Colonic mucosa (tissue), 4 donors: ENCODE measurements at regions of chr2 and their contacts with region 1.

Region 1: GRCh38 chr2:226984750-226985582 is 149.1 kb downstream of the RHBDD1 start:
- DNase-seq: peak; percentile 41
- H3K4me3 ChIP-seq: no peak overlapping the region
- H3K27ac ChIP-seq: no peak overlapping the region
- H3K4me1 ChIP-seq: no peaks in the 10 kb centered on the region
- H3K27me3 ChIP-seq: no peaks in the 10 kb centered on the region
- CTCF ChIP-seq: peak; percentile 42

Region 2: DNA sequence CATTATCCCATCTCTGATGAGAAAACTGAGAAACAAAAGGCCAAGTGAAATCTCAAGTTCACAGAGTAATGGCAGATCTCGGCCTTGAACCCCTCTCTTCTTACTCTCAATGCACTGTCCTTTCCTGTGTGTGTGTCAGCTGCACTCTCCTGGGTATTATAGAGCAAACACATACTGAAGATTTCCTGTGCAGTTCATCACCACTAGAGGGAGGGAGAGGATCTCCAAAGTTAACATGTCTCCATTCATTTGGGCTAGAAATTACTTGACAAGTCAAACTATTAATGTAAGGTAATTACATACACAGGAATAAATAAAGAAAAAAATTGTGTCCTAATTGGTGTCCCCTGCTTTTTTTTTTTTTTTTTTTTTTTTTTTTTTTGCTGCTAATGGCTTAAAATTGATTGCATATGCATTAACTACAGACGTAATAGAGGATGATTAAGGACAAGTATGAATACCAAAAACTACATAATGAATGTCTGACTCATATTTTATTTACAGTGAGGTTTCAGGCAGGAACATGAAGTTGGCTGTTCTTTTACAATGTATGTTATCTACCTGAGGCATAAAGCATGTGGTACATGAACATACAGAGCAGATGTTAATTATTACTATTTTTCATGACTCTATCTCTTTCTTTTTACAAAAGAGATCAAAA is 1316.2 kb before region 1 on chr2:
- intact Hi-C with region 1: loop called (anchors 5 kb)
- DNase-seq: peak; percentile 22
- H3K4me3 ChIP-seq: no peak overlapping the region
- H3K27ac ChIP-seq: no peak overlapping the region
- H3K4me1 ChIP-seq: no peaks in the 10 kb centered on the region
- H3K27me3 ChIP-seq: no peaks in the 10 kb centered on the region
- CTCF ChIP-seq: peak; percentile 74

Region 3: GRCh38 chr2:225889446-225889850 is 1095.5 kb before region 1 on chr2:
- intact Hi-C with region 1: loop called (anchors 5 kb)
- DNase-seq: peak; percentile 30
- H3K4me3 ChIP-seq: no peak overlapping the region
- H3K27ac ChIP-seq: no peak overlapping the region
- H3K4me1 ChIP-seq: no peaks in the 10 kb centered on the region
- H3K27me3 ChIP-seq: no peaks in the 10 kb centered on the region
- CTCF ChIP-seq: peak; percentile 57

Region 4: DNA sequence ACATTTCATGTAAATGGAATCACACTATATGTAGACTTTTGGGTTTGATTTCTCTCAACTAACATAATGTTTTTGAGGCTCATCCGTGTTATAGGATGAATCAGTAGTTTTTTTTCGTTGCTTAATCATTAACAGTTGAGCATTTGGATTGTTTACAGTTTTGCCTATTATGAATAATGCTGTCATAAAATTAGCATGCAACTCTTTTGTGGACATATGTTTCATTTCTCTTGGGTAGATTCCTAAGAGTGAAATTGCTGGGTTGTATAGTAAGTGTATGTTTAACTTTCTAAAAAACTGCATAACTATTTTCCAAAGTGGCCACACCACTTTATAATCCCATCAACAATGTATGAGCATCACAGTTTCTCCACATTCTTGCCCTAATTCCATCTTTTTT is 156.8 kb before region 1 on chr2:
- intact Hi-C with region 1: loop called (anchors 5 kb)
- DNase-seq: no peak
- H3K4me3 ChIP-seq: no peak overlapping the region
- H3K27ac ChIP-seq: no peak overlapping the region
- H3K4me1 ChIP-seq: no peaks in the 10 kb centered on the region
- H3K27me3 ChIP-seq: no peaks in the 10 kb centered on the region
- CTCF ChIP-seq: no peak

Region 5: DNA sequence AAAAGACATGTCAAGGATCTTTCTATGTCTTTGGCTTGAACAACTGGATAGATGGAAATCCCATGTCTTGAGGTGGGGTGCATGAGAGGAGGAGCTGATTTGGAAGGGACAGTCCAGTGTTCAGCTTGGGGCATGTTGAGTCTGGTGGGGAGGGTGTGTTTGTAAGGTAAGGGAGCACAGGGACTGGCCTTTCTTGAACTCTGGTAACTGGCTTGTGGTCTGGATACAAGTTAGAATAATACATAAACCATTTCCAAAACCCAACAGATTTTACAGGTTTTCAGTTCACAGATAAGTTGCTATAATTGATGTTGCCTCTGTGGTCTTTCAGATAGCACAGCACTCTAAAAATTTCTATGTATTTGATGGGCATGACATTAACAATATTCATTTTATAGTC is 124.9 kb before region 1 on chr2:
- intact Hi-C with region 1: no loop called
- DNase-seq: no peak
- H3K4me3 ChIP-seq: no peak overlapping the region
- H3K27ac ChIP-seq: no peak overlapping the region
- H3K4me1 ChIP-seq: no peaks in the 10 kb centered on the region
- H3K27me3 ChIP-seq: no peaks in the 10 kb centered on the region
- CTCF ChIP-seq: no peak

Region 6: DNA sequence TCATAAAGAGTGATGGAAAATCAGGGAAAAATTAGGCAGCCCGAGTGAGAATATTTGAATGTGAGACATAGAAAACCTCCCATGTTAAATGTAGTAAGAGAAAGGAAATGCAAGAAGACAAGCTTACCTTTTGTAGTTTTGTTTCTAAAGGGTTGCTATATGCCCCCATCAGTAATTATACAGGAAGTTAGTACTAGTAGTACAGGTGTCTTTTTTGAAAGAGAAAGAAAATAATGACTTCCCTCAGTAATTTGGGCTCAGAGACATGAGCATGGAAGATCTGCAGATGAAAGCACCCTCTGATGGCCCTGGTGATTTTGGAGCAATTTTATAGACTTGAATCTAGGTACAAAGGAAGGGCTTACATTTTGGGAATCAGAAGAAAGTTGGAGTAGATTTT is 68.3 kb before region 1 on chr2:
- intact Hi-C with region 1: no loop called
- DNase-seq: no peak
- H3K4me3 ChIP-seq: no peak overlapping the region
- H3K27ac ChIP-seq: no peak overlapping the region
- H3K4me1 ChIP-seq: no peaks in the 10 kb centered on the region
- H3K27me3 ChIP-seq: no peaks in the 10 kb centered on the region
- CTCF ChIP-seq: no peak

Region 7: DNA sequence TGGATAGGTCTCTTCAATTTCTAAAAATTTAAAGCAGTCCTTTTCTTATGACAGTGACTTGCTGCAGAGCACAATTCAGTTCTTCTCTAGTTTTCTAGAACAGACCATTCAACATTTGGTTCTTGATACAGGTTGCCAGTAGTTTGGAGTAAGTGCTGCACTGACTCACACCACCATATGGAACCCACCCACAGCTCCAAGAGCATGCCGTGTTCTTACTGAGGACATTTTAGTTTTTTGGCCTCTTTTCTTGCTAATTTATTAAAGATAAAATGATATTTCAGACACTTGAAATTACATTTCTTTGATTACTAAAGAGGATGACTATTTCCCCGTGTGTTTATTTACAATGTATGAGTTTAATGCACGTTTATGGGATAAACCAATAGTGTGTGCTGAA is 59.0 kb after region 1 on chr2:
- intact Hi-C with region 1: no loop called
- DNase-seq: no peak
- H3K4me3 ChIP-seq: no peak overlapping the region
- H3K27ac ChIP-seq: no peak overlapping the region
- H3K4me1 ChIP-seq: no peaks in the 10 kb centered on the region
- H3K27me3 ChIP-seq: no peaks in the 10 kb centered on the region
- CTCF ChIP-seq: no peak

Region 8: DNA sequence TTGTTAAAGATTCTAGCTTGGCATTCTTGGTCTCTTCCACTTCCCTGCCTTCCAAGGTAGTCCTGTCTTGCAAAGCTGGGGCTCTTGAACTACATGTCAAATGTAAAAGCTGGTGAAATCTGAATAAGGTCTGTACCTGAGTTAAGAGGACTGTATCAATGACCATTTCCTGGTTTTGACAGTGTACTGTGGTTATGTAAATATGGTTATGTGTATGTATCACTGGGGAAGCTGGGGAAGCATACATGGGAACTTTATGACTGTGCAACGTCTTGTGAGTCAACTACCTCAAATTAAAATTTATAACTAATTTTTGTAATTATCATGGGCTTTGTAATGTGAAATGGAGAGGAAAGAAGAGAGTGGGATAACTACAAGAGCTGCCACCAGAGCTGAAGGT is 97.3 kb after region 1 on chr2:
- intact Hi-C with region 1: no loop called
- DNase-seq: no peak
- H3K4me3 ChIP-seq: no peak overlapping the region
- H3K27ac ChIP-seq: no peak overlapping the region
- H3K4me1 ChIP-seq: no peaks in the 10 kb centered on the region
- H3K27me3 ChIP-seq: no peaks in the 10 kb centered on the region
- CTCF ChIP-seq: no peak